ENCODE measurements at regions of chr12 and their contacts with region 1.

Region 1: DNA sequence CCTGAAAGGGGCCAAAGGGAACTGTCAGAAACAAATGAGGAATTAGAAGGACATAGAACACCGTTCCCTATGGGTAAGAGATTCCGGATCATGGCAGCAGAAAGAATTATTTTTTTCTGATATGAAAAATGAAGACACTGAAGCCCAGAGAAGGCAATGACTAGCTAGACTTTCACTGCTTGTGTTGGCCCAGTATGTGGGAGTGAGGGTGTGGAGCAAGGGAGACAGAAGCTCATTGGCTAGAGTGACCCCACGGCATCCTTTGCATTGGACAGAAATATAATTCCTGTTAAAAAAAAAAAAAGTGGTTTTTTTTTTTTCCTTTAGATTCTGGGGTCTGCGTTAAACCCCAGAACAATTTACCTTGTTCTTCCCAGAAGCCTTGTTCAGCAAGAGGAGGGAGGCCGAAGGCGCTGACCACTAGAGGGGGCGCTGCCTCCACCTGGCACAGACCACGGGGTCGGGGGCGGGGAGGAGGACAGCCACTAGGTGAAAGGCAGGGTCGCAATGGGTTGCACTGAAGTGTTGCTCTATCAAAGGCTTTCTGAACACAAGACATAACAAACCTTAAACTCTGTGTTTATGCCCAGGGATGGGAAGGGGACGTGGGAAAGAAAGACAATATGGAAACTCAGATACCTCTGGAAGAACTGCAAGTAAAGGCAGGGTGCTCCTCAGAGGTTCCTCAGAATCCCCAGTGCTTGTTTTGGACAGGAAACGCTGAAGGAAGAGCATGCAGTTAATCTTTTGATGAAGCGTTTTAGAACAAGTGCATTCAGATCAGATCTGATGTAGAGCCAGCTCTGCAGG is 156.8 kb downstream of the KCNA5 start:
- DNase-seq: peak; percentile 4
- ATAC-seq: peak; percentile 94
- H3K4me3 ChIP-seq: no peak overlapping the region
- H3K27ac ChIP-seq: no peak overlapping the region
- H3K4me1 ChIP-seq: 0 out of 4 replicates have a peak, but pooled peaks cover 0 to 4% of the 10 kb centered on the region in 2 experiments
- H3K27me3 ChIP-seq: no peaks in the 10 kb centered on the region
- CTCF ChIP-seq: peak; percentile 80 to 94 (median 90)
- POLR2A ChIP-seq: no peak
- RAD21 ChIP-seq: peak; percentile 84

Region 2: GRCh38 chr12:5428332-5429221 is 228.1 kb after region 1 on chr12:
- CTCF ChIA-PET with region 1: interaction called, 11 read pairs
- POLR2A ChIA-PET with region 1: no interaction called
- RAD21 ChIA-PET with region 1: no interaction called
- intact Hi-C with region 1: no loop called
- DNase-seq: no peak
- ATAC-seq: peak; percentile 65
- H3K4me3 ChIP-seq: no peak overlapping the region; a peak in 1 of 4 replicates
- H3K27ac ChIP-seq: no peak overlapping the region
- H3K4me1 ChIP-seq: peaks cover 0 to 5% of the 10 kb centered on the region in 2 experiments; a peak in 2 of 4 replicates
- H3K27me3 ChIP-seq: no peaks in the 10 kb centered on the region
- CTCF ChIP-seq: peak; percentile 31 to 43 (median 33); a peak in 5 of 6 replicates
- POLR2A ChIP-seq: no peak
- RAD21 ChIP-seq: peak; percentile 54

Region 3: GRCh38 chr12:5442251-5443006 is 241.9 kb after region 1 on chr12:
- CTCF ChIA-PET with region 1: interaction called, 16 read pairs
- POLR2A ChIA-PET with region 1: no interaction called
- RAD21 ChIA-PET with region 1: interaction called in 1 of 2 experiments, 3 read pairs
- intact Hi-C with region 1: loop called (anchors 1 kb)
- DNase-seq: peak; percentile 39
- ATAC-seq: peak; percentile 90
- H3K4me3 ChIP-seq: no peak overlapping the region
- H3K27ac ChIP-seq: no peak overlapping the region
- H3K4me1 ChIP-seq: peaks cover 0 to 13% of the 10 kb centered on the region in 2 experiments; a peak in 3 of 4 replicates
- H3K27me3 ChIP-seq: peaks cover 44% of the 10 kb centered on the region
- CTCF ChIP-seq: peak; percentile 64 to 76 (median 75)
- POLR2A ChIP-seq: no peak
- RAD21 ChIP-seq: peak; percentile 85

Region 4: GRCh38 chr12:5511644-5512600 is 311.4 kb after region 1 on chr12:
- CTCF ChIA-PET with region 1: no interaction called
- POLR2A ChIA-PET with region 1: no interaction called
- RAD21 ChIA-PET with region 1: no interaction called
- intact Hi-C with region 1: loop called (anchors 1 kb)
- DNase-seq: peak; percentile 18
- ATAC-seq: peak; percentile 91
- H3K4me3 ChIP-seq: no peak overlapping the region
- H3K27ac ChIP-seq: no peak overlapping the region
- H3K4me1 ChIP-seq: no peaks in the 10 kb centered on the region; a peak in 1 of 4 replicates
- H3K27me3 ChIP-seq: no peaks in the 10 kb centered on the region; the same call in 1 of the 2 replicates
- CTCF ChIP-seq: peak; percentile 52 to 80 (median 75); a peak in 5 of 6 replicates
- POLR2A ChIP-seq: no peak
- RAD21 ChIP-seq: peak; percentile 59

Measured in HCT116 (cell line).